ENCODE measurements at regions of chr5 and their contacts with region 1.

Region 1: GRCh38 chr5:127909078-127909477 is 174.5 kb upstream of the SLC12A2 start:
- DNase-seq: peak; percentile 68
- H3K4me3 ChIP-seq: no peak overlapping the region
- H3K27ac ChIP-seq: no peak overlapping the region
- H3K4me1 ChIP-seq: peaks cover 15% of the 10 kb centered on the region
- H3K27me3 ChIP-seq: no peaks in the 10 kb centered on the region
- CTCF ChIP-seq: peak; percentile 56 to 62
- POLR2A ChIP-seq: no peak

Region 2: DNA sequence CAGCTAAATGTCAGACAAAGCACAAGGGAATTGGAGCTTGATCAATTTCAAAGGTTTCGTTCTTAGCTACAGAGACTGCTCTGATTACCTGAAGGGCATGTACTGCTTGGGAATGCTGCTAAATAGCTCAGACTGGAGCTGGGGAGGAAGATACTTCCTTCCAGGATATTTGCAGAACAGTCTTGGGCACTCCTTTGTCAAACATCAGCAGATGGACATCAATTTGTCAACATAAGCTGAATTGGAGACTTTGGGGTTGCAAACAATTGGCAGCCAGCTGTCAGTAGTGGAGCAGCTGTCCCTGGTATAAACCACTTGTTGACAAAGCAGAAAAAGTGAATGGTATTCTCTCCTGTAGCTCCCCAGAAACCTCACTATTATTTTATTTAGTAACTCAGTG is 23.9 kb before region 1 on chr5:
- CTCF ChIA-PET with region 1: interaction called, 7 read pairs
- POLR2A ChIA-PET with region 1: no interaction called
- dilution Hi-C with region 1: no loop called
- intact Hi-C with region 1: loop called (anchors 2 kb)
- DNase-seq: peak; percentile 25
- H3K4me3 ChIP-seq: no peak overlapping the region
- H3K27ac ChIP-seq: no peak overlapping the region
- H3K4me1 ChIP-seq: peaks cover 14% of the 10 kb centered on the region
- H3K27me3 ChIP-seq: no peaks in the 10 kb centered on the region
- CTCF ChIP-seq: no peak
- POLR2A ChIP-seq: no peak

Region 3: DNA sequence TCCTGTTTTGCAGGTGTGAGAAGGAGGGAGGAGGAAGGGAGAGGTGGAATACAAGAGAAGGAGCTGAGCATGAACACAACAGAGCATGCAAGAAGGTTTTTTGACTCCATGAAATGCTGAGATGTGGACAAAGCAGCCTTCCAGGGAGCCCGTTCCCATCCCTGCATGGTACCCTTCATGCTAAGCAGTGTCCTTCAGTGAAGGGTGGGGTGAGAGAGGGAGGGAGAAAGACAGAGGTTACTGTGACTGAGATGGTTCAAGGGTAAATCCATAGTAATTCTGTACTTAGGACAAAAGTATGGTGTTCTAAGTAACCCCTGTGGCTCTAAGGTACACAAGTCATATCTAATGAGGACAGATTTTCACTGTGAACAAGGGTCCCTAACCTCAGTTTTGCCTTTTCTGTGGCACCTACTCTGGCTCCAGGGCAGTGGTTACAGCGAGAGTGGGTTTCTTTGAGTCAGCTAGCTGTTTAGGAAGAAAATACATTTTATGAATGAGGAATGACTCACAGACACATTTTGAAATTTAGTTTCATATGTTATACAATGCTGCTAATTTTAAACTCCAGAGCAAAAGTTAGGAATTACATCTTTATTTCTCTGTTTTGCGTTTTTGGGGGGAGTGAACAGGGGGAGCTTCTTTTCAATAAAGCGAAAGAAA is 10.4 kb before region 1 on chr5:
- CTCF ChIA-PET with region 1: interaction called, 10 read pairs
- POLR2A ChIA-PET with region 1: no interaction called
- dilution Hi-C with region 1: no loop called
- intact Hi-C with region 1: no loop called
- DNase-seq: no peak
- H3K4me3 ChIP-seq: no peak overlapping the region
- H3K27ac ChIP-seq: no peak overlapping the region
- H3K4me1 ChIP-seq: no peaks in the 10 kb centered on the region
- H3K27me3 ChIP-seq: no peaks in the 10 kb centered on the region
- CTCF ChIP-seq: no peak
- POLR2A ChIP-seq: no peak

Region 4: GRCh38 chr5:127925916-127926315 is 16.8 kb after region 1 on chr5:
- CTCF ChIA-PET with region 1: interaction called, 17 read pairs
- POLR2A ChIA-PET with region 1: no interaction called
- dilution Hi-C with region 1: no loop called
- intact Hi-C with region 1: no loop called
- DNase-seq: no peak
- H3K4me3 ChIP-seq: no peak overlapping the region
- H3K27ac ChIP-seq: no peak overlapping the region
- H3K4me1 ChIP-seq: peaks cover 11% of the 10 kb centered on the region
- H3K27me3 ChIP-seq: no peaks in the 10 kb centered on the region
- CTCF ChIP-seq: no peak
- POLR2A ChIP-seq: no peak

Region 5: GRCh38 chr5:127988146-127988760 is 79.2 kb after region 1 on chr5:
- CTCF ChIA-PET with region 1: interaction called, 4 read pairs
- POLR2A ChIA-PET with region 1: no interaction called
- dilution Hi-C with region 1: no loop called
- intact Hi-C with region 1: loop called (anchors 2 kb)
- DNase-seq: peak; percentile 92
- H3K4me3 ChIP-seq: no peak overlapping the region
- H3K27ac ChIP-seq: peak overlapping the region; percentile 65
- H3K4me1 ChIP-seq: peaks cover 13% of the 10 kb centered on the region
- H3K27me3 ChIP-seq: no peaks in the 10 kb centered on the region
- CTCF ChIP-seq: no peak
- POLR2A ChIP-seq: no peak

Region 6: GRCh38 chr5:128201065-128201926 is 292.2 kb after region 1 on chr5:
- CTCF ChIA-PET with region 1: interaction called, 3 read pairs
- POLR2A ChIA-PET with region 1: no interaction called
- dilution Hi-C with region 1: no loop called
- intact Hi-C with region 1: loop called (anchors 1 kb)
- DNase-seq: peak; percentile 63
- H3K4me3 ChIP-seq: no peak overlapping the region
- H3K27ac ChIP-seq: no peak overlapping the region
- H3K4me1 ChIP-seq: peaks cover 10% of the 10 kb centered on the region
- H3K27me3 ChIP-seq: no peaks in the 10 kb centered on the region
- CTCF ChIP-seq: peak; percentile 79 to 85
- POLR2A ChIP-seq: no peak

Measured in endothelial cell of umbilical vein (primary cell).